Left colon (tissue), 2 donors: ENCODE measurements at regions of chr19 and their contacts with region 1.

Region 1: DNA sequence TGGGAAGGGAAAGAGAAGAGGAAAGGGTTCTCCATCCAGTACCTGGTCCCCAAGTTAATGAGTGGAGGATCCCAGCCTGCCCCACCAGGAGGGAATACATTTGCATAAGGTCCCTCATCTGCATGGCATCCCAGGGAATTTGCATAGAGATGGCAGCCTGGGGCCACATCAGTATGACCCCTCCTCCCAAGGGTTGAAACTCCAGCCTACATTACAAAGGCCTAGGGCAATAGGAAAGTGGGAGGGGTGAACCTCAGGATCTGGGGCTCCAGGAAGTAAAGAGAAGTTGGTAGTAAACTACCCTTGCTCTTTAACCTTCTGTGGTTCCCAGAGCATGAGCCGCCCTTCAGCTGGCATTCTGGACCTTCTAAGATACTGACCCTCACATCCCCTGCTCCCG is 6.8 kb upstream of the NECTIN2 start:
- DNase-seq: no peak
- ATAC-seq: peak; percentile 55

Region 2: DNA sequence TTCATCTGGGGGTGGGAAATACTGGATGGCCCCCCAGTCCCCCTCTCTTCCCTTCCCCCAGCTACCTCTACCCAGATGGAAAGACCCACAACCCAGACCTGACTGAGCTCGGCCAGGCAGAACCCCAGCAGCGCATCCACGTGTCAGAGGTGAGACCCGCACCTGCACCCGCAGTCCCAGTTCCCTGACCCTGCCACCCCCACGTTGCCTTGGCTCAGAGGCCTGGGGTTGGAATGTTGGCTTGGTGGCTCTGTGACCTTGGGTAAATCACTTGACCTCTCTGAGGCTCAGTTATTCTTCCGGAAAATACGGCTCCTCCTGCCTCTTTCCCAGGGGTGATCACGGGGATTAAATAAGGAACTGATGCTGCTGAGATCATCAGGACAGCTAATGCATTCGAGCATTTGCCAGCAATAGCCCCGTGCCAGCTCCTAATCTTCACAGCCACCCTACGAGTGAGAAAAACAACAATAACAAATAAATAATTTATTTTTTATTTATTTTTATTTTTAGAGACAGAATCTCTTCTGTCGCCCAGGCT is 49.3 kb before region 1 on chr19:
- intact Hi-C with region 1: loop called (anchors 5 to 10 kb)
- DNase-seq: no peak
- ATAC-seq: no peak